IMR-90 (cell line): ENCODE measurements at regions of chr6 and their contacts with region 1.

Region 1: GRCh38 chr6:85544776-85545175 is 48.9 kb downstream of the SNX14 start:
- DNase-seq: peak; percentile 43
- ATAC-seq: peak; percentile 40; the same call in 1 of the 2 replicates
- H3K4me3 ChIP-seq: no peak overlapping the region
- H3K27ac ChIP-seq: no peak overlapping the region
- H3K4me1 ChIP-seq: no peaks in the 10 kb centered on the region; the same call in 1 of the 2 replicates
- H3K27me3 ChIP-seq: no peaks in the 10 kb centered on the region
- CTCF ChIP-seq: no peak
- POLR2A ChIP-seq: no peak
- RAD21 ChIP-seq: no peak

Region 2: GRCh38 chr6:85574932-85575598 is 30.3 kb after region 1 on chr6:
- CTCF ChIA-PET with region 1: no interaction called
- POLR2A ChIA-PET with region 1: no interaction called
- dilution Hi-C with region 1: no loop called
- in situ Hi-C with region 1: no loop called
- intact Hi-C with region 1: loop called (anchors 5 kb)
- DNase-seq: peak; percentile 89
- ATAC-seq: peak; percentile 95
- H3K4me3 ChIP-seq: no peak overlapping the region
- H3K27ac ChIP-seq: no peak overlapping the region
- H3K4me1 ChIP-seq: peaks cover 9% of the 10 kb centered on the region; the same call in 1 of the 2 replicates
- H3K27me3 ChIP-seq: no peaks in the 10 kb centered on the region
- CTCF ChIP-seq: no peak
- POLR2A ChIP-seq: no peak
- RAD21 ChIP-seq: no peak

Region 3: GRCh38 chr6:85714893-85715530 is 170.2 kb after region 1 on chr6:
- CTCF ChIA-PET with region 1: no interaction called
- POLR2A ChIA-PET with region 1: no interaction called
- dilution Hi-C with region 1: no loop called
- in situ Hi-C with region 1: no loop called
- intact Hi-C with region 1: no loop called
- DNase-seq: no peak
- ATAC-seq: no peak
- H3K4me3 ChIP-seq: no peak overlapping the region
- H3K27ac ChIP-seq: no peak overlapping the region
- H3K4me1 ChIP-seq: no peaks in the 10 kb centered on the region
- H3K27me3 ChIP-seq: no peaks in the 10 kb centered on the region
- CTCF ChIP-seq: no peak
- POLR2A ChIP-seq: no peak
- RAD21 ChIP-seq: no peak